CD4-positive, alpha-beta memory T cell (primary cell): ENCODE measurements at regions of chr16 and their contacts with region 1.

Region 1: GRCh38 chr16:813204-813915 is 12.8 kb upstream of the GNG13 start:
- DNase-seq: peak; percentile 27 to 45 (median 37)
- H3K4me3 ChIP-seq: no peak overlapping the region
- H3K4me3 Mint-ChIP-seq: no peak overlapping the region
- H3K27ac ChIP-seq: no peak overlapping the region
- H3K27ac Mint-ChIP-seq: peak overlapping the region in 1 of 7 donors; percentile 23
- H3K4me1 ChIP-seq: peaks cover 8% of the 10 kb centered on the region
- H3K4me1 Mint-ChIP-seq: peaks cover 0 to 11% (median 5%) of the 10 kb centered on the region in 4 donors
- H3K27me3 ChIP-seq: peaks cover 5% of the 10 kb centered on the region
- H3K27me3 Mint-ChIP-seq: peaks cover 14 to 25% of the 10 kb centered on the region in 2 donors

Region 2: GRCh38 chr16:1102921-1103635 is 289.7 kb after region 1 on chr16:
- CTCF ChIA-PET with region 1: interaction called, 3 read pairs
- POLR2A ChIA-PET with region 1: no interaction called
- intact Hi-C with region 1: loop called (anchors 2 kb)
- DNase-seq: peak in 4 of 5 donors; percentile 62 to 74 (median 63)
- H3K4me3 ChIP-seq: no peak overlapping the region
- H3K4me3 Mint-ChIP-seq: no peak overlapping the region
- H3K27ac ChIP-seq: no peak overlapping the region
- H3K27ac Mint-ChIP-seq: no peak overlapping the region
- H3K4me1 ChIP-seq: peaks cover 4% of the 10 kb centered on the region
- H3K4me1 Mint-ChIP-seq: no peaks in the 10 kb centered on the region
- H3K27me3 ChIP-seq: no peaks in the 10 kb centered on the region
- H3K27me3 Mint-ChIP-seq: peaks cover 2% of the 10 kb centered on the region in 2 donors

Region 3: GRCh38 chr16:1300664-1301476 is 487.5 kb after region 1 on chr16:
- CTCF ChIA-PET with region 1: no interaction called
- POLR2A ChIA-PET with region 1: no interaction called
- intact Hi-C with region 1: no loop called
- DNase-seq: peak; percentile 62 to 77 (median 69)
- H3K4me3 ChIP-seq: no peak overlapping the region
- H3K4me3 Mint-ChIP-seq: no peak overlapping the region
- H3K27ac ChIP-seq: no peak overlapping the region
- H3K27ac Mint-ChIP-seq: no peak overlapping the region
- H3K4me1 ChIP-seq: peaks cover 26% of the 10 kb centered on the region
- H3K4me1 Mint-ChIP-seq: peaks cover 4 to 25% (median 16%) of the 10 kb centered on the region in 4 donors
- H3K27me3 ChIP-seq: no peaks in the 10 kb centered on the region
- H3K27me3 Mint-ChIP-seq: peaks cover 4 to 5% of the 10 kb centered on the region in 2 donors

Region 4: GRCh38 chr16:1543085-1543896 is 729.9 kb after region 1 on chr16:
- CTCF ChIA-PET with region 1: no interaction called
- POLR2A ChIA-PET with region 1: no interaction called
- intact Hi-C with region 1: no loop called
- DNase-seq: peak in 4 of 5 donors; percentile 15 to 76 (median 38)
- H3K4me3 ChIP-seq: peak overlapping the region in 1 of 2 donors; percentile 6
- H3K4me3 Mint-ChIP-seq: peak overlapping the region in 7 of 8 donors; percentile 72 to 84 (median 79)
- H3K27ac ChIP-seq: peak overlapping the region; percentile 42
- H3K27ac Mint-ChIP-seq: peak overlapping the region; percentile 27 to 94 (median 80)
- H3K4me1 ChIP-seq: peaks cover 85% of the 10 kb centered on the region
- H3K4me1 Mint-ChIP-seq: peaks cover 29 to 90% (median 66%) of the 10 kb centered on the region in 4 donors
- H3K27me3 ChIP-seq: no peaks in the 10 kb centered on the region
- H3K27me3 Mint-ChIP-seq: no peaks in the 10 kb centered on the region